ENCODE measurements at regions of chr4 and their contacts with region 1.

Region 1: DNA sequence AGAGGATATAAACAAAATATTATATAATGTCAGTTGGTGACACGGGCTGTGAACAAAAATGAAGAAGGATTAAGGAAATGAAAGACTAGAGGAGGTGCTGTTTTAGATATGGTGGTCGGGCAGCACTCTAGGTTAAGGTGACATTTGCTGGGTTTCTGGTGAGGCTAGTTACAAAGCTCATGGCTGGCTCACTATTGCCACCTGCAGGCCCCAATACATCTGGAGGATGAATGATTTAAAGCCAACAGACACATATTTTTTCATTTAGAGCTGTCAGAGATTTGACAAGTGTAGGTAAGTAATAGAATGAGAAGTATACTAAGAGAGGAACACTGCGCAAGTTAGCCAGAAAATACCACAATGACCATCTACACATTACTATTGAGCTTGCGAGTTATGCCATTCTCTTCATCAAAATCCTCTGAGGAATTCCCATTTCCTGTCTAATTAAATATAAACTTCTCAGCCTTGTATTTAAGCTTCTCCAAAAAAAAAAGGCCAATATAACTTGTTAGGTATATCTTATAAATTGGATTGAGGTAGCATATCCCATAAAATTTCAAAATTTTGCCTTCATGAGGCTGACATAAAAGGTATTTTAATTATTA is 6.4 kb upstream of the FGG start:
- DNase-seq: no peak
- ATAC-seq: no peak
- H3K4me3 ChIP-seq: no peak overlapping the region
- H3K27ac ChIP-seq: no peak overlapping the region
- H3K4me1 ChIP-seq: peaks cover 0 to 5% (median 0%) of the 10 kb centered on the region in 9 donors
- H3K27me3 ChIP-seq: peaks cover 0 to 3% (median 0%) of the 10 kb centered on the region in 7 donors
- CTCF ChIP-seq: peak; percentile 8 to 64 (median 53)

Region 2: DNA sequence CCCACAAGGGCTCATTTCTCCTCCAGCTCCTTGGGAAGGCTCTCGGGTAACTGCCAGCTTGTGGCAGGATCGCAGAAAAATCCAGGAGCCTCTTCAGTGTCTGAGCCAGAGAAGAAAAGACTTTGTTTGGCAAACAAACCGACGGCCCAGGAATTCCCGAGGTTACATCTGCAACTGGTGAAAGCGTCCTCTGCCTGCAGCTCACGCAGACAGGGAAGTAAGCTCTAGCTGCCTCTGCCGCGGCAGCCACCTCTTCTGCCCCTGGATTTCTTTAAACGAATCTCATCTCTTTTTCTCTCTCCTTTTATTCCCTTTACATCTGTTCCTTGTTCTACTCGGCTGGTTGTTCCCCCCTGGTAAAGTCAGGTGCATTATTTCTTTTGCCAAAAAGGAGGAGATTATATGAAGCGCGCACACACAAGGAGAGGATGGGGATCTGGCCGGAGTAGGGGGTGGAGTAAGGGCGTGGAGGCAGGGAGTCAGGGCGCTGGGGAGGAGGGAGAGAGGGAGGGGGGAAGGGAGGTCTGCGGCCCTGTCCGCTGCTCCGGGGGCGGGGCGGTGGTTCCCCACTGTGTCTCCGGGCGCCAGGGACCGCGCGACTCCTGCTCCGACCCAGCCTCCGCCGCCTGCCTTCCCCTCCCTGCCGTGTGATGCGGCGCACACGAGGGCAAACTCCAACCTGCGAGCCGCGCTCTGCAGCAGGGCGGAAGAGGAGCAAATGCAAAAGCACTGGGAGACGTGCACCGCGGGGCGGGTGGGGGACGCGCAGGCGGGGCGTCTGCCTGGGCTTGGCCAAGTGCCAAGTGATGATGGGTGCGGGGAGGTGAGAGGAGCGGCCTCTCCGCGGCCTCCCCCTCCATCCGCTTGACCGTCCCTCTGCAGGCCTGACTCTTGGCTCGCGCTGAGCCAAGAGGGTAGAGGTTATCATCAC is 127.2 kb before region 1 on chr4 and contains the start of gene DCHS2:
- intact Hi-C with region 1: no loop called
- DNase-seq: peak in 1 of 2 donors; percentile 28
- ATAC-seq: peak; percentile 34 to 69 (median 63)
- H3K4me3 ChIP-seq: peak within 1 kb of the TSS; percentile 19 to 51 (median 37)
- H3K27ac ChIP-seq: no peak within 1 kb of the TSS
- H3K4me1 ChIP-seq: peaks cover 0 to 24% (median 21%) of the 10 kb centered on the region in 9 donors
- H3K27me3 ChIP-seq: peaks cover 26 to 92% (median 74%) of the 10 kb centered on the region in 7 donors
- CTCF ChIP-seq: no peak
- total RNA-seq, gene DCHS2: 0.02 to 0.14 (median 0.04) TPM in 4 of 10 donors, not detected in the others

Region 3: GRCh38 chr4:154559494-154560418 is 59.1 kb before region 1 on chr4:
- intact Hi-C with region 1: loop called in 7 of 10 experiments (anchors 5 to 10 kb)
- DNase-seq: no peak
- ATAC-seq: no peak
- H3K4me3 ChIP-seq: no peak overlapping the region
- H3K27ac ChIP-seq: no peak overlapping the region
- H3K4me1 ChIP-seq: no peaks in the 10 kb centered on the region
- H3K27me3 ChIP-seq: peaks cover 0 to 3% (median 0%) of the 10 kb centered on the region in 7 donors
- CTCF ChIP-seq: peak in 6 of 9 donors; percentile 9 to 49 (median 28)

Region 4: DNA sequence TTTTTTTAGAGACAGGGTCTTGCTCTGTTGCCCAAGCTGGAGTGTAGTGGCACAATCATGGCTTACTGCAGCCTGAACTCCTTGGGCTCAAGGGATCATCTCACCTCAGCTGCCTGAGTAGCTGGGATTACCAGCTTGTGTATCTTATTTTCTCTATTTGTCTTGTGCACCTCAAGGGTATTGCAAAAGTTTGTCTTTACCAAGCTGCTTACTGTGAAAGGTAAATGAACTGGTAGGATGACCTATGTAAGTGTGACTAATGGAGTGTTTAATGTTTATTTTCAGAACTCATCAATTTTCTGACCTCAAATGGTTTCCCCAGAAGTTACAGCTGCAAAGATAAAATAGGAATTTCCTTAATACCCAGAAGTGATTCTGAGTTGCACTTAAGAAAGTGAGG is 23.0 kb before region 1 on chr4:
- intact Hi-C with region 1: no loop called
- DNase-seq: no peak
- ATAC-seq: no peak
- H3K4me3 ChIP-seq: no peak overlapping the region
- H3K27ac ChIP-seq: no peak overlapping the region
- H3K4me1 ChIP-seq: no peaks in the 10 kb centered on the region
- H3K27me3 ChIP-seq: peaks cover 0 to 13% (median under 1%) of the 10 kb centered on the region in 7 donors
- CTCF ChIP-seq: no peak

Measured in heart right ventricle (tissue), 16 donors.